ENCODE measurements at regions of chr1 and their contacts with region 1.

Region 1: DNA sequence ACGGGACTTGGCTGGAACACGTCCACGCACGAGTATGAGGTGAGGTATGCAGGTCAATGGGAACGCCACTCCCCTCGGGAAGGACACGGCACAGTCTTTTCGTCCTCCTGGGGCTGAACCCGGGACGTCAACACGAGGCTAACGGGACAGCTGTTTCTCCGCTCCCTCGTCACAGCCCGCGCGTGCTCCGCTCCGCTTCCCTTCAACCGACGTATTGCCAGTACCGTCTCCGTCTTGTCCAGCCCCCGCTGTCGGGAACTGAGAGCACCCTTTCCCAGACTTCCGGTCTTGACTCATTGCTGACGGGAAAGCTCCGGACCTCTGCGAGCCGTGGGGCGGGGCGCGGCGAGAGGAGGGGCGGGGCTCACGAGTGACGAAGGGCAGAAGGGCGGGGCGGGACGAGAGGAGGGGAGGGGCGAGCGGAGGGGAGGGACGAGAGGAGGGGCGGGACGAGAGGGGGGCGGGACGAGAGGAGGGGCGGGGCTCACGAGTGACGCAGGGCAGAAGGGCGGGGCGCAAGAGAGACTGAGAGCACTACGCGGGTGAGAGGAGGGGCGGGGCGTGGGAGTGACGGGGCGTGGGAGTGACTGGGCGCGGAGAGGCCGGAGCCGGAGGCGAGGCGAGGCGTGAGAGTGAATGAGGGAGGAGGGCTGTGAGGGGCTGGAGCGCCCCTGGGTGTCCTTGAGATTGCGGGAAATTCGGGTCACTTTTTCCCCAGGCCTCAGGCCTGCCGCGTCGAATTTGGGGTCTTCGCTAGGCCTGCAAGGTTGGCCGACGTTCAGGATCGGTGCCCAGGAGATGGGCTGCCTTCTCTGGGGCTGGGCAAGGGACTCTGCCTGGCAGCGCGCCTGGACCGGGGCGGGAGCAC is 22.2 kb upstream of the CFAP126 start:
- DNase-seq: peak; percentile 96
- H3K4me3 Mint-ChIP-seq: peak overlapping the region; percentile 91
- H3K27ac Mint-ChIP-seq: peak overlapping the region; percentile 94
- H3K4me1 Mint-ChIP-seq: peaks cover 43% of the 10 kb centered on the region
- H3K27me3 Mint-ChIP-seq: no peaks in the 10 kb centered on the region

Region 2: GRCh38 chr1:161282991-161283390 is 106.9 kb before region 1 on chr1:
- CTCF ChIA-PET with region 1: no interaction called
- POLR2A ChIA-PET with region 1: no interaction called
- DNase-seq: no peak
- H3K4me3 Mint-ChIP-seq: no peak overlapping the region
- H3K27ac Mint-ChIP-seq: no peak overlapping the region
- H3K4me1 Mint-ChIP-seq: no peaks in the 10 kb centered on the region
- H3K27me3 Mint-ChIP-seq: peaks cover 28% of the 10 kb centered on the region

Region 3: DNA sequence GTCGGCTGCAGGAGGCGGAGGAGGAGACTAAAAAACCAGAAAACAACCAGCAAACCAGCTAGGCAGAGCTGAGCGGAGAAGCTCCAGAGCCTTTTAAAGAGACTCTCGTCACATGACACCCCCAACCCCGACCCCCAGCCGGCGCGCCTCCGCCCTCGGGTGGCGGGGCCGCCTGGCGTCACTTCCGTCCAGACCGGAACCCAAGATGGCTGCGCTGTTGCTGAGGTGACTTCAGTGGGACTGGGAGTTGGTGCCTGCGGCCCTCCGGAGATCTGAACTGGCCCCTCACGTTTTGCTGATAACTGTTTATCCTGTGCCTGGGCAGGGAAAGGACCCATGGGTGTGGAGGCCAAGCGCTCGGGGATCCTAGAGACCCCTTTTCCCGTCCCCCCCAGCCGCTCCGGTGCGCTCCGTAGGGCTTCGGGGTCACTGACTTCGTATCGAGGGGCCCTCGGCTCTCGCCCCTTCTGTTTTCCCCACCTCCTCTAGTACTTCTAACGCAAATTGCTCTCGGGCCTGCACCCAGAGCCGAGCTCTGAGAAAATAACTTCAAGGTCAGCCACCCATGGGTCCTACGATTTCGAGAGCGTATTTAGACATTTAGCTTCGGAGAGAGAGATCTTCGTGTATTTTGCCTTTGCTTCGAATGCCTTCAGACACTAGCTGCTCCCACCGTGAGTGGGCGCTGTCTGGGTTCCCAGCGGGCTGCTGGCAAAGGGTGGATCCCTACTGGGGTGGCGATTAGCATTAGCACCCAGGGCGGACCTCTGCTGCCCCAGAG is 75.5 kb before region 1 on chr1 and contains the start of gene SDHC:
- CTCF ChIA-PET with region 1: interaction called, 4 read pairs
- POLR2A ChIA-PET with region 1: interaction called, 15 read pairs
- DNase-seq: peak; percentile 91
- H3K4me3 Mint-ChIP-seq: peak within 1 kb of the TSS; percentile 93
- H3K27ac Mint-ChIP-seq: peak within 1 kb of the TSS; percentile 95
- H3K4me1 Mint-ChIP-seq: peaks cover 20% of the 10 kb centered on the region
- H3K27me3 Mint-ChIP-seq: peaks cover 3% of the 10 kb centered on the region
- total RNA-seq, gene SDHC: 172 to 173 TPM